Heart right ventricle (tissue), 16 donors: ENCODE measurements at regions of chr11 and their contacts with region 1.

Region 1: GRCh38 chr11:36455658-36456111 is 54.4 kb downstream of the TRAF6 start:
- DNase-seq: peak; percentile 84 to 89
- ATAC-seq: peak; percentile 87 to 94 (median 92)
- H3K4me3 ChIP-seq: no peak overlapping the region
- H3K27ac ChIP-seq: peak overlapping the region; percentile 70 to 90 (median 80)
- H3K4me1 ChIP-seq: peaks cover 11 to 59% (median 51%) of the 10 kb centered on the region in 9 donors
- H3K27me3 ChIP-seq: no peaks in the 10 kb centered on the region
- CTCF ChIP-seq: peak in 2 of 9 donors; percentile 6 to 24

Region 2: GRCh38 chr11:36376888-36377758 is 78.6 kb before region 1 on chr11:
- intact Hi-C with region 1: loop called in 3 of 10 experiments (anchors 5 to 10 kb)
- DNase-seq: peak; percentile 43 to 60
- ATAC-seq: peak; percentile 79 to 92 (median 84)
- H3K4me3 ChIP-seq: peak overlapping the region; percentile 45 to 88 (median 78)
- H3K27ac ChIP-seq: peak overlapping the region in 7 of 10 donors; percentile 28 to 87 (median 62)
- H3K4me1 ChIP-seq: peaks cover 0 to 54% (median 14%) of the 10 kb centered on the region in 9 donors
- H3K27me3 ChIP-seq: peaks cover 0 to 25% (median 15%) of the 10 kb centered on the region in 7 donors
- CTCF ChIP-seq: peak; percentile 33 to 81 (median 64)